Natural killer cell (primary cell): ENCODE measurements at regions of chr5 and their contacts with region 1.

Region 1: DNA sequence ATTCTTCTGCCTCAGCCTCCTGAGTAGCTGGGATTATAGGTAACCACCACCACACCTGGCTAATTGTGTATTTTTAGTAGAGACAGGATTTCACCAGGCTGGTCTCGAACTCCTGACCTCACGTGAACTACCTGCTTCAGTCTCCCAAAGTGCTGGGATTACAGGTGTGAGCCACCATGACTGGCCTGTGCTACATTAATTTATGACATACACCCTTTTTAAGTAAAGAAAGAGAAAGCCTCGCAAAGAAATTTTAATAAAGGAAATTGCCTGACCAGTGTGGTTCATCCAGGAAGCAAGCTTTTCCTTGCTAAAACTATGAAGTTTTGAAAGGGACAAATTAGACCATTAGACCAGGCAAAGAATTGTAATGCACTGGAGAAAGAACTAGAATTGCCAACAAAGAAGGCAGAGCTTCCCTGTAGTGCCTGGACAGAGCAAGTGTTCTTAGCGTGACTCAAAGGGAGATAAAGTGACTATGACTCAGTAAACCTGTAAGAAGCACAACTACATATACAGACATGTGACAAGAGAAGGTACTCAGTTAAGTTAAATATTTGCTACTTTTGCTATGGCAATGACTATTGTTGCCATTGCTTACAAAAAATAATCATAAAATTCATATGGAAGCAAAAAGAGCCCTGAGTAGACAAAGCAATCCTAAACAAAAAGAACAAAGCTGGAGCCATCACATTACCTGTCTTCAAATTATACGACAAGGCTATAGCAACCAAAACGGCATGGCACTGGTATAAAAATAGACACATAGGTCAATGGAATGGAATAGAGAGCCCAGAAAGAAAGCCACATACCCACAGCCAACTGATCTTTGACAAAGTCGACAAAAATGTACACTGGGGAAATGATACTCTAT is 54.6 kb downstream of the FYB1 start:
- DNase-seq: peak in 1 of 2 donors; percentile 69
- ATAC-seq: peak; percentile 27 to 63 (median 62)
- H3K4me3 ChIP-seq: no peak overlapping the region
- H3K4me3 Mint-ChIP-seq: peak overlapping the region; percentile 78
- H3K27ac ChIP-seq: peak overlapping the region; percentile 61
- H3K27ac Mint-ChIP-seq: peak overlapping the region; percentile 90 to 91
- H3K4me1 ChIP-seq: peaks cover 23% of the 10 kb centered on the region
- H3K4me1 Mint-ChIP-seq: peaks cover 73 to 82% of the 10 kb centered on the region in 2 donors
- H3K27me3 ChIP-seq: no peaks in the 10 kb centered on the region
- H3K27me3 Mint-ChIP-seq: no peaks in the 10 kb centered on the region
- CTCF ChIP-seq: no peak

Region 2: GRCh38 chr5:39177631-39177964 is 12.8 kb after region 1 on chr5:
- intact Hi-C with region 1: loop called (anchors 2 kb)
- DNase-seq: peak in 1 of 2 donors; percentile 83
- ATAC-seq: peak; percentile 74 to 90 (median 81)
- H3K4me3 ChIP-seq: peak overlapping the region; percentile 4
- H3K4me3 Mint-ChIP-seq: peak overlapping the region; percentile 75
- H3K27ac ChIP-seq: peak overlapping the region; percentile 87
- H3K27ac Mint-ChIP-seq: peak overlapping the region; percentile 86 to 87
- H3K4me1 ChIP-seq: peaks cover 49% of the 10 kb centered on the region
- H3K4me1 Mint-ChIP-seq: peaks cover 90 to 92% of the 10 kb centered on the region in 2 donors
- H3K27me3 ChIP-seq: no peaks in the 10 kb centered on the region
- H3K27me3 Mint-ChIP-seq: no peaks in the 10 kb centered on the region
- CTCF ChIP-seq: no peak

Region 3: GRCh38 chr5:39209924-39210323 is 45.2 kb after region 1 on chr5:
- intact Hi-C with region 1: loop called (anchors 2 kb)
- DNase-seq: peak; percentile 66 to 92
- ATAC-seq: peak; percentile 69 to 86 (median 85)
- H3K4me3 ChIP-seq: no peak overlapping the region
- H3K4me3 Mint-ChIP-seq: peak overlapping the region; percentile 87
- H3K27ac ChIP-seq: peak overlapping the region; percentile 83
- H3K27ac Mint-ChIP-seq: peak overlapping the region; percentile 84 to 96
- H3K4me1 ChIP-seq: peaks cover 61% of the 10 kb centered on the region
- H3K4me1 Mint-ChIP-seq: peaks cover 86 to 94% of the 10 kb centered on the region in 2 donors
- H3K27me3 ChIP-seq: no peaks in the 10 kb centered on the region
- H3K27me3 Mint-ChIP-seq: no peaks in the 10 kb centered on the region
- CTCF ChIP-seq: no peak

Region 4: GRCh38 chr5:39256477-39257235 is 91.9 kb after region 1 on chr5:
- intact Hi-C with region 1: loop called (anchors 5 kb)
- DNase-seq: peak in 1 of 2 donors; percentile 73
- ATAC-seq: peak; percentile 70 to 94 (median 94)
- H3K4me3 ChIP-seq: no peak overlapping the region
- H3K4me3 Mint-ChIP-seq: peak overlapping the region; percentile 35
- H3K27ac ChIP-seq: no peak overlapping the region
- H3K27ac Mint-ChIP-seq: peak overlapping the region; percentile 69 to 81
- H3K4me1 ChIP-seq: peaks cover 19% of the 10 kb centered on the region
- H3K4me1 Mint-ChIP-seq: peaks cover 76 to 79% of the 10 kb centered on the region in 2 donors
- H3K27me3 ChIP-seq: no peaks in the 10 kb centered on the region
- H3K27me3 Mint-ChIP-seq: no peaks in the 10 kb centered on the region
- CTCF ChIP-seq: no peak

Region 5: GRCh38 chr5:39274398-39275085 is 109.8 kb after region 1 on chr5:
- intact Hi-C with region 1: loop called (anchors 2 kb)
- DNase-seq: peak in 1 of 2 donors; percentile 72
- ATAC-seq: peak; percentile 58 to 67 (median 59)
- H3K4me3 ChIP-seq: peak overlapping the region; percentile 30
- H3K4me3 Mint-ChIP-seq: peak overlapping the region; percentile 93
- H3K27ac ChIP-seq: peak overlapping the region; percentile 88
- H3K27ac Mint-ChIP-seq: peak overlapping the region; percentile 90 to 98
- H3K4me1 ChIP-seq: peaks cover 33% of the 10 kb centered on the region
- H3K4me1 Mint-ChIP-seq: peaks cover 35 to 50% of the 10 kb centered on the region in 2 donors
- H3K27me3 ChIP-seq: no peaks in the 10 kb centered on the region
- H3K27me3 Mint-ChIP-seq: no peaks in the 10 kb centered on the region
- CTCF ChIP-seq: no peak

Region 6: DNA sequence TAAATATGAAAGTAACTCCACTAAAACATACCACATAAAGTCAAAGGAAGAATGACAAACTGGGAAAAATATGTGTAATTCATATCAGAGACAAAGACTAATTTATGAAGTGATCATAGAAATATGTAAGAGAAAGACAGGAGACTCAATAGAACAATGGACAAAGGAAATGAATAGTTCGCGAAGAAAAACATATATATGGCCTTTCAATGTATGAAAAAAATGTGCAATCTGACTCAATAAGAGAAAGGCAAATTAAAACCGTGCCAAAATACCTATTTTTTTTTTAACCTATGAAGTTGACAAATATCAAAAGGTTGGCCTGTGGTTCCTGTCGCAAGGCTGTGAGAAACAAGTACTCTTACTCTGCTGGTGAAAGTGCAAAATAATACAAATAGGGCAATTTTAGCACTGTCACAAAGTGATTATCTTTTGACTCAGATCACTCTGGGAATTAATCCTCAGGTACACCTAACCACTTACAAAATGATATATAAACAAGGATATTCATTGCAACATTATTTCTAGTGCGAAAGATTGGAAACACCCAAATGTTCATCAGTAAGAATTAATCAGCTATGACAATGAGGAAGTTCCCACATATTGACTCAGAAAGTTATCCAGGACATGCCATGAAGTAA is 195.8 kb after region 1 on chr5:
- intact Hi-C with region 1: no loop called
- DNase-seq: no peak
- ATAC-seq: no peak
- H3K4me3 ChIP-seq: no peak overlapping the region
- H3K4me3 Mint-ChIP-seq: no peak overlapping the region
- H3K27ac ChIP-seq: no peak overlapping the region
- H3K27ac Mint-ChIP-seq: no peak overlapping the region
- H3K4me1 ChIP-seq: no peaks in the 10 kb centered on the region
- H3K4me1 Mint-ChIP-seq: no peaks in the 10 kb centered on the region
- H3K27me3 ChIP-seq: no peaks in the 10 kb centered on the region
- H3K27me3 Mint-ChIP-seq: peaks cover 2 to 8% of the 10 kb centered on the region in 2 donors
- CTCF ChIP-seq: no peak